GM10248 (cell line): ENCODE measurements at regions of chr3 and their contacts with region 1.

Region 1: GRCh38 chr3:13657660-13658435 is 108.9 kb downstream of the FBLN2 start:
- DNase-seq: peak; percentile 83
- CTCF ChIP-seq: peak; percentile 88

Region 2: DNA sequence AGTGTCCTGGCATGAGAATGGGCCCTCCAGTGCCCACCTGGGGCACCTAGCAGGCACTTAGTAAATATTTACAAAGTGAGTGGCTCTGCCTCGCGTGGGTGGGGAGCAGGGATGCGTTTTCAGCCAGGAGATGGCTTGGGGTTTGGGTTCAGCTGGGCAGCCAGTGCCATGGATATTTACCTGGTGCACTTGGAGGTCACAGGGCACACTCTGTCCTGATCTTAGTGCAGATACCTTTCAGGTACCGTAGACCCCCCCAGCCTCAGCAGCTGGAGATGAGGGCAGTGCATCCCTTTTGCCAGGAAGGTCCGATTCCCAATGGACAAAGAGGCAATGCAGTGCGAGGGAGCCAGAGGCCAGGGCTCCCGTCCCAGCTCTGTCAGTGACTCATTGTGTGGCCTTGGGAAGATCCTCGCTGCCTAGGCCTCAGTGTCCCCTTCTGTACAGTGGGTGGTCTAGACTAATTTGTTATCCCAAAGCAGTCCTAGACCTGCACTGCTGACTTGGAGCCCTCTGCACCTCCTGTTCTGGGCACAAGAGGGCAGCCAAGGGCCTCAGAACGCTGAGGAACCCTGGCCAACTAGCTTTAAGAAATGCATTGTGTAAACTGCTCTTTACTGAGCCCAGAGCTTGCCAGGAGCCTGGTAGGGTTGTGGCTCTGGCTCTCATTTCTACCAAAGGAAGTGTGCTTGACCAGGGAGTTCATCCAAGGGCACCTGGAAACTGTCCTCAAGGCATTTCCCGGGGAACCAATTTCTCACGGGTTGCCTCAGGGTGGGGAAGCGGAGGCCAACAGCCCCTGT is 161.7 kb before region 1 on chr3:
- CTCF ChIA-PET with region 1: interaction called, 155 read pairs
- POLR2A ChIA-PET with region 1: interaction called, 3 read pairs
- DNase-seq: peak; percentile 77
- CTCF ChIP-seq: peak; percentile 97

Region 3: GRCh38 chr3:13600941-13601576 is 56.8 kb before region 1 on chr3:
- CTCF ChIA-PET with region 1: no interaction called
- POLR2A ChIA-PET with region 1: no interaction called
- DNase-seq: no peak
- CTCF ChIP-seq: no peak

Region 4: GRCh38 chr3:13687517-13687943 is 29.7 kb after region 1 on chr3:
- CTCF ChIA-PET with region 1: interaction called, 14 read pairs
- POLR2A ChIA-PET with region 1: no interaction called
- DNase-seq: no peak
- CTCF ChIP-seq: no peak

Region 5: DNA sequence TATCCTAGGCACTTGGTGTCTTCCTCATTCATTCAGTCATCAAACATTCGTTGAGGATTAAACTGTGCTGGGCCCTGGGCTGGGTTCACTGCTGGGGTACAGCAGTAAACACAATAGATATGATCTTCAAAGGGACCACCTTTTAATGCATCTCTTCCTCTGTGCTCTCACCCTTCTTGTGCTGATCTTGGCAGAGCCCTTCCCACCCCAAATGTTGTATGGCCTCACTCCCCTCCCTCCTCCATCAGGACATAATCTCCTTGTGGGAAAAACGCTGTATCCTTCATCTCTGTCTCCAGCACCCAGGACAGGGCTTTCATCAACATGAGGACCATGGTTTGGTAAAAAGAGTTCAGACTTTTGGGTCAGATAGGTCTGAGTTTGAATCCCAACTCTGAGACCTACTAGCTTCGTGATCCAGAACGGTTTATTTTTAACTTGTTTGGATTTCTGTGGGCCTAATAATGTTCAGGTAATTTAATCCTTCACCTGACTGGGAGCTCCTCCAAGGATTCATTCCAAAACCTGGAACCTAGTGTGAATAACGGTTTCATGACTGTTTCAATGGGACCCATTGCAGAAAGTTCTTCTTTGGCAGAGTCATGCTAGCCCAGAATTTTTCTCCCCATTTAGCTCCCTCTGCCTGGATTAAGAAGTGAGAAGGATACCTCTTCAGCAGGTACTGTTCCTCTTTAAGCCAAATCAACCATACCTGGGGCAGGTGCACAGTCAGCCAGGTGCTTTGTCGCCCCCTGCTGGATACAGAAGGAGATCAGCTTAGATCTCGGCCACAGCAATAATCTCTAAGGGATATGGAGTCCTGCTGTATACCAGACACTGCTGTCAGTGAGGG is 227.2 kb after region 1 on chr3:
- CTCF ChIA-PET with region 1: interaction called, 41 read pairs
- POLR2A ChIA-PET with region 1: no interaction called
- DNase-seq: peak; percentile 68
- CTCF ChIP-seq: peak; percentile 70